Panc1 (cell line): ENCODE measurements at regions of chr18 and their contacts with region 1.

Region 1: DNA sequence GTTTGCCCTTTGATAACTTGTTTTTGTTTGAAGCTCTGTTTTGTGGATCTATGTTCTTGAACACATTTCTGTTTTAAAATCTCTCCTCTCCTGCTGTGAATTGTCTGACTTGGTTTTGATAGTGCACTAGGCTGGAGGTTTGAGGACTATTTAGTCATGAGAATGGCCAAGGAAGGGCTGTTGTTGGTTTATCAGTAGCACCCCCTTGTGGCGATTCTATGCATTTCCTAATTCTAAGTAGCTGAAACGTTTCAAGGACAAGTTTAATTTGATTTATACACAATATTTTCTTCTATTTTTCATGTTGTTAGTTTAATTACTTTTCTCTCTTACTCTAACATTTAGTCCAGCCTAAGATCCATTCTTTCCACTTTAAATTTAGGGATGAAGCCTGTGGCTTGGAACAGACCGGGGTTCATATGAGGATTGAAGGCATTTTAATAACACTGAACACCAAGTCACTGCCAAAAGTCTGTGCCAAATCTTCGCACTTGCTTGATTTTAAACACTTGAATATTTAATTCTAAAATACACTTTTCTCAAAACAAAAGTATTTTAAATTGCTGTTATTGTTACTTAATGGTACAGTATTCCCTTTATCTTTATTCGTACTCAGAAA is 166.0 kb downstream of the SOCS6 start:
- DNase-seq: peak; percentile 61
- ATAC-seq: peak; percentile 83
- H3K4me3 ChIP-seq: no peak overlapping the region
- H3K27ac ChIP-seq: peak overlapping the region; percentile 92
- H3K4me1 ChIP-seq: peaks cover 18% of the 10 kb centered on the region
- H3K27me3 ChIP-seq: no peaks in the 10 kb centered on the region
- CTCF ChIP-seq: peak; percentile 71; the same call in 1 of the 2 replicates

Region 2: GRCh38 chr18:70085641-70086040 is 369.2 kb before region 1 on chr18:
- CTCF ChIA-PET with region 1: no interaction called
- POLR2A ChIA-PET with region 1: no interaction called
- in situ Hi-C with region 1: no loop called
- intact Hi-C with region 1: loop called (anchors 10 kb)
- DNase-seq: no peak
- ATAC-seq: no peak
- H3K4me3 ChIP-seq: no peak overlapping the region
- H3K27ac ChIP-seq: no peak overlapping the region
- H3K4me1 ChIP-seq: no peaks in the 10 kb centered on the region; the same call in 1 of the 2 replicates
- H3K27me3 ChIP-seq: no peaks in the 10 kb centered on the region
- CTCF ChIP-seq: no peak

Region 3: DNA sequence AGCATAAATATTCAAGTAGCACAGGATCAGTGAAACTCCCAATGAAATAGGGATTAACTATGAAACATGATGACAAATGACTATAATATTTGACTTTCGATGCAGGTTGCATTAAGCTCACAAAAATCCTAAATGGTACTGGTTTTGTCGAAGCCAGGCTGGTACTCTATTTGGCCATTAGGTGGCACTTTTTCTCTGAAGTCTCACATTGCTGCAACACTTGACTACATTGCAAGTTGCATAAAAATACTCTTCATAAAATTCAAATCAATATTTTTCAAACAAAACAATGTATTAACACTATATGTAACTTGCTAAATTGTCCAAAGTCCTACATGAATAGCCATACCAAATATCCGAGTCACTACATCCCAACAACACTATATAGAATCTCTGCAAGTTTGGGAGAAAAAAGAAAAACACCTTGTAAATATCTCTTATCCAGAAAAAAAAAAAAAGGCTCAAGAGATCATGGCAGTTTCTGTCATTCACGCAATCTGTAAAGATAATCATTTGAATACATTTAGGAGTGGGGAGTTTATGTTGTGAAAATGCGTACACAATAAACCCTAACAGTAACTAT is 258.9 kb before region 1 on chr18:
- CTCF ChIA-PET with region 1: interaction called, 15 read pairs
- POLR2A ChIA-PET with region 1: no interaction called
- in situ Hi-C with region 1: no loop called
- intact Hi-C with region 1: loop called (anchors 2 kb)
- DNase-seq: no peak
- ATAC-seq: no peak
- H3K4me3 ChIP-seq: no peak overlapping the region
- H3K27ac ChIP-seq: peak overlapping the region; percentile 80
- H3K4me1 ChIP-seq: peaks cover 22% of the 10 kb centered on the region
- H3K27me3 ChIP-seq: no peaks in the 10 kb centered on the region
- CTCF ChIP-seq: peak; percentile 57; the same call in 1 of the 2 replicates

Region 4: GRCh38 chr18:70296289-70296688 is 158.5 kb before region 1 on chr18:
- CTCF ChIA-PET with region 1: interaction called, 3 read pairs
- POLR2A ChIA-PET with region 1: interaction called, 3 read pairs
- in situ Hi-C with region 1: no loop called
- intact Hi-C with region 1: loop called (anchors 5 kb)
- DNase-seq: no peak
- ATAC-seq: peak; percentile 82
- H3K4me3 ChIP-seq: peak overlapping the region; percentile 36 to 55
- H3K27ac ChIP-seq: peak overlapping the region; percentile 98
- H3K4me1 ChIP-seq: peaks cover 54% of the 10 kb centered on the region
- H3K27me3 ChIP-seq: no peaks in the 10 kb centered on the region
- CTCF ChIP-seq: no peak

Region 5: GRCh38 chr18:70513502-70514171 is 58.8 kb after region 1 on chr18:
- CTCF ChIA-PET with region 1: no interaction called
- POLR2A ChIA-PET with region 1: no interaction called
- in situ Hi-C with region 1: no loop called
- intact Hi-C with region 1: no loop called
- DNase-seq: no peak
- ATAC-seq: no peak
- H3K4me3 ChIP-seq: no peak overlapping the region
- H3K27ac ChIP-seq: peak overlapping the region; percentile 54; the same call in 1 of the 2 replicates
- H3K4me1 ChIP-seq: no peaks in the 10 kb centered on the region
- H3K27me3 ChIP-seq: no peaks in the 10 kb centered on the region
- CTCF ChIP-seq: no peak